ENCODE measurements at regions of chr3 and their contacts with region 1.

Region 1: GRCh38 chr3:184250167-184250828 is 826 bp downstream of the EEF1AKMT4 start:
- DNase-seq: peak; percentile 49
- H3K4me3 ChIP-seq: peak overlapping the region; percentile 87
- CTCF ChIP-seq: peak; percentile 94

Region 2: GRCh38 chr3:184040010-184040409 is 210.3 kb before region 1 on chr3:
- CTCF ChIA-PET with region 1: interaction called, 10 read pairs
- POLR2A ChIA-PET with region 1: no interaction called
- DNase-seq: no peak
- H3K4me3 ChIP-seq: no peak overlapping the region
- CTCF ChIP-seq: peak; percentile 53

Region 3: GRCh38 chr3:184145111-184145524 is 105.2 kb before region 1 on chr3:
- CTCF ChIA-PET with region 1: interaction called, 24 read pairs
- POLR2A ChIA-PET with region 1: no interaction called
- DNase-seq: no peak
- H3K4me3 ChIP-seq: no peak overlapping the region
- CTCF ChIP-seq: peak; percentile 35

Region 4: DNA sequence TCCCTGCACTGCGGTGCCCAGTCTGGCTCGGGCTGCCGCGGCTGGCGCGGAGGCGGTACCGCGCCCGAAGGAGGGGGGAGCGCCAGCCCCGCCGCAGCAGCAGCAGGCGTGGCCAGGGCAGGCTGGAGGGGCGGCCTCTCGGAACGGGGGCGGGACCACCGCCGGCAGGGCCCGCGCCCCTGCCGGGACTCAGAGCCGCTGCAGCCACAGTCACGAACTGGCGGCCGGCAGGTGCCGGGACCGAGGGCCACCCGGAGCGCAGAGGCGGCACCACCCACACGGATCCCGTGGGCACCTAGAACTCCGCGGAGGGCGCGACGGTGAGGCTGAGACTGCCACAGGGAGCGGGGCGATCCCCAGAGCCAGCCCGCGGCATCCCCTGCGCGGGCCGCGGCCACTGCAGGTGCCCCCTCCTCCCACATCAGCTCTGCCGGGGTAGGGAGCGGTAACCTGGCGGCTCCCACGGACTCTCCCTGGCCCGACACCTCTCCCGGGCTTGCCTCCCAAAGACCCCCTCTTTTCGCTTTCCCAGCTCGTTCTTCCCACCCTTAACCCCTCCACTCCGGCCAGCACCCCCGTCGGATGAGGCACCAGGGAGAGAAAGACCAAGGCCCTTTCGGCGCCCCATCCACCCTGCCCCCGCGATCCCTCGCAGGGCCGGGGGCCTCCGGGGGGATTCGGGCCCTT is 20.8 kb before region 1 on chr3 and contains the start of gene VWA5B2:
- CTCF ChIA-PET with region 1: interaction called, 20 read pairs
- POLR2A ChIA-PET with region 1: no interaction called
- DNase-seq: no peak
- H3K4me3 ChIP-seq: peak within 1 kb of the TSS; percentile 40
- CTCF ChIP-seq: no peak

Region 5: GRCh38 chr3:184261270-184261853 is 11.1 kb after region 1 on chr3 and contains the start of gene CAMK2N2:
- CTCF ChIA-PET with region 1: interaction called, 48 read pairs
- POLR2A ChIA-PET with region 1: no interaction called
- DNase-seq: no peak
- H3K4me3 ChIP-seq: peak within 1 kb of the TSS; percentile 57
- CTCF ChIP-seq: no peak